ENCODE measurements at regions of chr15 and their contacts with region 1.

Region 1: DNA sequence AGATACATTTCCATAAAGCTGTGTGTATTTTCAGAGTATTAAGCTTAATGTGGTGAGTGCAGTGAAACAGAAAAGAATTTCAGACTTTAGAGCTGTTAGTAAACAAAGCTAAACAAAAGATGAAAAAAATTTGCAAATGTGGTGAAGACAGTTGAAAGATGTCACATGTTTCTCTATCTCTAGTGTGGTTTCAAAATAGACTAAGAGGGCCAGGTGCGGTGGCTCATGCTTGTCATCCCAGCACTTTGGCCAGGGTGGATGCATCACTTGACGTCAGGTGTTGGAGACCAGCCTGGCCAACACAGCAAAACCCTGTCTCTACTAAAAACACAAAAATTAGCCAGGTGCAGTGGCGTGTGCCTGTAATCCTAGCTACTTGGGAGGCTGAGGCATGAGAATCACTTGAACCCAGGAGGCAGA is 466.0 kb upstream of the NR2F2 start:
- DNase-seq: peak; percentile 73
- ATAC-seq: peak; percentile 95
- H3K4me3 ChIP-seq: no peak overlapping the region
- H3K27ac ChIP-seq: no peak overlapping the region
- H3K4me1 ChIP-seq: peaks cover 6% of the 10 kb centered on the region; the same call in 1 of the 2 replicates
- H3K27me3 ChIP-seq: no peaks in the 10 kb centered on the region
- CTCF ChIP-seq: no peak
- EP300 ChIP-seq: peak; percentile 85 to 96
- POLR2A ChIP-seq: no peak
- RAD21 ChIP-seq: no peak

Region 2: GRCh38 chr15:95684693-95685115 is 179.8 kb before region 1 on chr15:
- CTCF ChIA-PET with region 1: no interaction called
- POLR2A ChIA-PET with region 1: no interaction called
- RAD21 ChIA-PET with region 1: no interaction called
- SMC1A ChIA-PET with region 1: no interaction called
- in situ Hi-C with region 1: no loop called
- intact Hi-C with region 1: no loop called
- DNase-seq: no peak
- ATAC-seq: no peak
- H3K4me3 ChIP-seq: no peak overlapping the region
- H3K27ac ChIP-seq: no peak overlapping the region
- H3K4me1 ChIP-seq: no peaks in the 10 kb centered on the region
- H3K27me3 ChIP-seq: no peaks in the 10 kb centered on the region
- CTCF ChIP-seq: no peak
- EP300 ChIP-seq: no peak
- POLR2A ChIP-seq: no peak
- RAD21 ChIP-seq: no peak

Region 3: DNA sequence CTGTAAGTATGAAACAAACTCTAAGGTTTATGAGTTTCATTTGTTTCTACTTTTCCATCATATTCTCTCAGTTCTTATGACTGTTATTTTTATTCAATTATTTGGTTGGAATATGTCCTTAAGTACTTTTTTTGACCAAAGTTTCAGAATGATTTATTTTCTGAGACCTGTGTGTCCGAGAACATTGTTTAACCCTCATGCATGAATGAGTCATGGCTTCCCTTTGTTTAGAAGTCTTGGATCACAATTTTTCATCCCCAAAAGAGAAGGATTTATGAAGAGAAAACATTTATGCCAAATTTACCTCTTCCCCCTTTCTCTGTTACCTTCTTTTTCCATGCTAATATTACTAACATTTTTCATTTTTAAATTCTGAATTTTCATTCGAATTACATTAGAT is 52.0 kb before region 1 on chr15:
- CTCF ChIA-PET with region 1: no interaction called
- POLR2A ChIA-PET with region 1: no interaction called
- RAD21 ChIA-PET with region 1: no interaction called
- SMC1A ChIA-PET with region 1: no interaction called
- in situ Hi-C with region 1: no loop called
- intact Hi-C with region 1: no loop called
- DNase-seq: no peak
- ATAC-seq: no peak
- H3K4me3 ChIP-seq: no peak overlapping the region
- H3K27ac ChIP-seq: no peak overlapping the region
- H3K4me1 ChIP-seq: no peaks in the 10 kb centered on the region
- H3K27me3 ChIP-seq: no peaks in the 10 kb centered on the region
- CTCF ChIP-seq: no peak
- EP300 ChIP-seq: no peak
- POLR2A ChIP-seq: no peak
- RAD21 ChIP-seq: no peak

Region 4: DNA sequence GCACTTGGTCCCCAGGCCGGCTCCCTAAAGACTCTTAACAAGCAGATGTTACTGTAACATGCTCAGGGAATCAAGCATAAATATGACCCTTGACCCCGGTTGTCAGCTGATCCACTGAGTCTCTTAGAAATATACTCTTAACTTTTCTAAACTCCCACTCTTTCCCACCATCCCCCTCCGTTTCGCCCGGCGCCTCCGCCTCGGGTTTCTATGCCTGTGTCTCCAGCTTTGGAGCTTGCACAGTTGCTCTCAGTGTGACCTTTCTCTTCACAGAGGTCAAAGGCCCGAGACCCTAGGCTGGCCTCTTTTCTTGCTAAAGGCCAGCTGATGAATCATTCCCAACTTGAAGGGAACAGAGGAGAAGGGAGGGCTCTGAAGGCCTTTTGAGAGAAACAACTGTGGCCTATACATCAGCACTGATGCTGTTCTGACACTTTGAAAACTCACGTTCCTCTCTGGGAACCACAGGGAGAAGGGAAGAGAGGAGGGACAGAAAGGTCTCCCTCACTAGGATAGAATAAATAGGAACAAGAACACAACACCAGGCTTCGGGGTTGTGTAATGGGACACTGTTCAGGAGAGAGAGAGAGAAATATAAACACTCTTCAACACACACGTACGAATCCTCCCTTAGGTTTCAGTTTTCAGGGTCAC is 18.5 kb before region 1 on chr15:
- CTCF ChIA-PET with region 1: interaction called, 3 read pairs
- POLR2A ChIA-PET with region 1: interaction called, 4 read pairs
- RAD21 ChIA-PET with region 1: interaction called, 6 read pairs
- SMC1A ChIA-PET with region 1: interaction called, 10 read pairs
- in situ Hi-C with region 1: no loop called
- intact Hi-C with region 1: no loop called
- DNase-seq: no peak
- ATAC-seq: peak; percentile 58
- H3K4me3 ChIP-seq: no peak overlapping the region
- H3K27ac ChIP-seq: peak overlapping the region; percentile 51
- H3K4me1 ChIP-seq: peaks cover 7% of the 10 kb centered on the region; the same call in 1 of the 2 replicates
- H3K27me3 ChIP-seq: no peaks in the 10 kb centered on the region
- CTCF ChIP-seq: no peak
- EP300 ChIP-seq: no peak
- POLR2A ChIP-seq: no peak
- RAD21 ChIP-seq: no peak

Region 5: GRCh38 chr15:95929232-95929846 is 64.9 kb after region 1 on chr15:
- CTCF ChIA-PET with region 1: interaction called, 4 read pairs
- POLR2A ChIA-PET with region 1: no interaction called
- RAD21 ChIA-PET with region 1: interaction called, 4 read pairs
- SMC1A ChIA-PET with region 1: interaction called, 9 read pairs
- in situ Hi-C with region 1: no loop called
- intact Hi-C with region 1: loop called (anchors 1 kb)
- DNase-seq: peak; percentile 48
- ATAC-seq: peak; percentile 98
- H3K4me3 ChIP-seq: no peak overlapping the region
- H3K27ac ChIP-seq: no peak overlapping the region
- H3K4me1 ChIP-seq: no peaks in the 10 kb centered on the region
- H3K27me3 ChIP-seq: no peaks in the 10 kb centered on the region
- CTCF ChIP-seq: no peak
- EP300 ChIP-seq: peak; percentile 69 to 86; a peak in 3 of 4 replicates
- POLR2A ChIP-seq: no peak
- RAD21 ChIP-seq: no peak

Measured in GM12878 (cell line).